ENCODE measurements at regions of chr7 and their contacts with region 1.

Region 1: DNA sequence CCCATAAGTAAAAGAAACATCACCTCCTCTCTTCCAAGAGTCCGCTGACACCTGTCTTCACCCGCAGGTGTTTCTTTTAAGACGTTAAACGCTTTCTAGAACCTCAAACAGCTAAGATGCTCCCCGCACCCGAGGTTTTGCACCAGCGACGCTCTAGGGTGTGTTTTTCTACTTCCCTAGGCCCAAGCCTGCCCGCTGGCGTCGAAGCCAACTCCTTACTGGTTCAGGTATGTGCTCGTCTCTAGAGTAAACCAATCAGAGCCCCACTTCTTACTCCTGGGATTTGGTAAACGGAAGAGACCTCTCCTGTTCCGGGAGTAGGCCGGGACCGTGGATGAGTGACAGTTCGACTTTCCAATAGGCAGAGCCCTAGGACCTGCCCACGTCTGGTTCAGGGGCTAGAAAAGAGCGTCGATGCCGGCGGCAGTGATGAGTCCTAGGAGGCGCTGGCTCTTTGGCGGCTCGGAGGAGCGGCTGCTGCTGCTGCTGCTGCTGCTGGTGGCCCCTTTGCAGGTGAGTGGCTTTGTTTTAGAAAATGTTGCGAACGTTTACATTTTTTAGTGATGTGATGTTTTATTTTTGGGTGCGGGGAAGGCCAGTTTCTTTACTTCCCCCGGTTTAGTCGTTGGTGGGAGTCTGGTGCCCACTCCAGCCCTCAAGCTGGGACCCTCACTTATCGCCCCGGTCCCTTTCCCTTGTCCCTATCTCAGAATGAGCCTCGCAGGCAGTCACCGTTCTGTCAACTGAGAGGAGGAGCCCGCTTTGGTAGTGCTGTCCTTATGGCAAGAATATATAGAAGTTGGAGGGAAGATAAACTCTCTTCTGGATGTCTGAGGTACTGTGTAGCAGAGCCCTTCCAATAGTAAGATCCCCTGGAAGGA is at the start of gene BPGM:
- DNase-seq: peak; percentile 99 to 100
- H3K4me3 ChIP-seq: peak within 1 kb of the TSS; percentile 77
- H3K27ac ChIP-seq: peak within 1 kb of the TSS; percentile 34
- H3K4me1 ChIP-seq: peaks cover 16% of the 10 kb centered on the region
- H3K27me3 ChIP-seq: no peaks in the 10 kb centered on the region
- CTCF ChIP-seq: no peak
- total RNA-seq, gene BPGM: 18.5 and 24.6 TPM in 2 replicates

Region 2: GRCh38 chr7:133290041-133290440 is 1356.6 kb before region 1 on chr7:
- CTCF ChIA-PET with region 1: no interaction called
- POLR2A ChIA-PET with region 1: interaction called, 11 read pairs
- intact Hi-C with region 1: no loop called
- DNase-seq: no peak
- H3K4me3 ChIP-seq: no peak overlapping the region
- H3K27ac ChIP-seq: no peak overlapping the region
- H3K4me1 ChIP-seq: no peaks in the 10 kb centered on the region
- H3K27me3 ChIP-seq: no peaks in the 10 kb centered on the region
- CTCF ChIP-seq: no peak

Region 3: DNA sequence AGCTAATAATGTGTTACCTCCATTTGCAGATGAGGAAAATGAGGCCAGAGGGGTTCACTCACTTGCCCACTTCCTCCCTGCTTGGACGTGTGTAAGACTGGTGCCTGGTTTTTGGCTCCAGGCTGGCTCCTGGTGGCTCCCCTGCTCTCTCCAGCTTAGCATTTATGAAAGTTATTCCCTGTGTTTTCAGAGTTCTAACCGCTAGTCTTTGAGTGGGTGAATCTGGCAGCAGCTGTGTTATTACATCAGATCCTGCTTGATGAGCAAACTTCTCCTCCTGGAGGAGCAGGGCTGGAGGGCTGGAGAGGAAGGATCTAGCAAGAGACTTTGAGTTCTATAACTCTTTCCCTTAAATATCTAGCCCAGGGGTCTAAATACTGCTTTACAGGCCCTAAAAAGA is 258.7 kb after region 1 on chr7:
- CTCF ChIA-PET with region 1: no interaction called
- POLR2A ChIA-PET with region 1: interaction called, 12 read pairs
- intact Hi-C with region 1: no loop called
- DNase-seq: no peak
- H3K4me3 ChIP-seq: no peak overlapping the region
- H3K27ac ChIP-seq: no peak overlapping the region
- H3K4me1 ChIP-seq: no peaks in the 10 kb centered on the region
- H3K27me3 ChIP-seq: no peaks in the 10 kb centered on the region
- CTCF ChIP-seq: no peak